Calu3 (cell line): ENCODE measurements at regions of chr3 and their contacts with region 1.

Region 1: GRCh38 chr3:161423911-161424522 is 52.7 kb upstream of the SPTSSB start:
- DNase-seq: no peak
- H3K4me3 Mint-ChIP-seq: no peak overlapping the region
- H3K27ac Mint-ChIP-seq: no peak overlapping the region
- H3K4me1 Mint-ChIP-seq: peaks cover 9% of the 10 kb centered on the region
- H3K27me3 Mint-ChIP-seq: no peaks in the 10 kb centered on the region
- CTCF ChIP-seq: peak; percentile 77

Region 2: DNA sequence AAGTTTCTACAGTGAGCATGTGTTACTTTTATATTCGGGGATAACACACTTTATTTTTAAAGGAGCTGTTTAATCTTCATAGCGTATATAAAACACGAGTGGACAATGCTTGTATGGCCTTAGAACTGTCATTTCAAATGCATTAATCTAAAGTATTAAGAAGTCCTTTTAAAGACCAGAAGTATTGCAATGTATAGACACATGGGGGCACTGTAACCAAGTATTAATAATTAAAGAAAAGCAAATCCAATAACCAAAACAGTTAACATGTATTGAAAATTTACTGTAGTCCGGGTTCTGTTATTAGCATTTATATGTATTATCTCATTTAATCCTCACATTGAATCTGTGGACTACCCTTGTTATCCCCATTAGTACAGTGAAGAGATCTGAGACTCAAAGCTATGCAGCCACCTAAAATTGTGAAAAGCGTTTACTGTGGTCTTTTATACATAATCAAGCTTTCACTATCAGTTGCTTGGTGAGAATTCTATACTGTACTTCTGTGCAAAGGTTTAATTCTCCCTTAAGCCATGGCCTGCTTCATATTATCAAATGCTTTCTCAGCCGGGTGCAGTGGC is 737.0 kb before region 1 on chr3:
- CTCF ChIA-PET with region 1: no interaction called
- intact Hi-C with region 1: loop called (anchors 5 kb)
- DNase-seq: no peak
- H3K4me3 Mint-ChIP-seq: no peak overlapping the region
- H3K27ac Mint-ChIP-seq: no peak overlapping the region
- H3K4me1 Mint-ChIP-seq: peaks cover 29% of the 10 kb centered on the region
- H3K27me3 Mint-ChIP-seq: no peaks in the 10 kb centered on the region
- CTCF ChIP-seq: peak; percentile 76

Region 3: GRCh38 chr3:160921020-160921635 is 502.9 kb before region 1 on chr3:
- CTCF ChIA-PET with region 1: no interaction called
- intact Hi-C with region 1: loop called (anchors 2 kb)
- DNase-seq: peak; percentile 52
- H3K4me3 Mint-ChIP-seq: no peak overlapping the region
- H3K27ac Mint-ChIP-seq: no peak overlapping the region
- H3K4me1 Mint-ChIP-seq: no peaks in the 10 kb centered on the region
- H3K27me3 Mint-ChIP-seq: no peaks in the 10 kb centered on the region
- CTCF ChIP-seq: peak; percentile 94

Region 4: GRCh38 chr3:161096771-161097355 is 327.2 kb before region 1 on chr3:
- CTCF ChIA-PET with region 1: interaction called, 8 read pairs
- intact Hi-C with region 1: loop called (anchors 1 kb)
- DNase-seq: peak; percentile 68
- H3K4me3 Mint-ChIP-seq: no peak overlapping the region
- H3K27ac Mint-ChIP-seq: no peak overlapping the region
- H3K4me1 Mint-ChIP-seq: peaks cover 10% of the 10 kb centered on the region
- H3K27me3 Mint-ChIP-seq: no peaks in the 10 kb centered on the region
- CTCF ChIP-seq: peak; percentile 91

Region 5: GRCh38 chr3:161567577-161568361 is 143.8 kb after region 1 on chr3:
- CTCF ChIA-PET with region 1: no interaction called
- intact Hi-C with region 1: no loop called
- DNase-seq: no peak
- H3K4me3 Mint-ChIP-seq: no peak overlapping the region
- H3K27ac Mint-ChIP-seq: no peak overlapping the region
- H3K4me1 Mint-ChIP-seq: no peaks in the 10 kb centered on the region
- H3K27me3 Mint-ChIP-seq: no peaks in the 10 kb centered on the region
- CTCF ChIP-seq: no peak

Region 6: GRCh38 chr3:161600173-161600572 is 176.2 kb after region 1 on chr3:
- CTCF ChIA-PET with region 1: no interaction called
- intact Hi-C with region 1: no loop called
- DNase-seq: no peak
- H3K4me3 Mint-ChIP-seq: no peak overlapping the region
- H3K27ac Mint-ChIP-seq: no peak overlapping the region
- H3K4me1 Mint-ChIP-seq: no peaks in the 10 kb centered on the region
- H3K27me3 Mint-ChIP-seq: no peaks in the 10 kb centered on the region
- CTCF ChIP-seq: no peak